B cell (primary cell): ENCODE measurements at regions of chr9 and their contacts with region 1.

Region 1: GRCh38 chr9:5628530-5629311 is at the start of gene RIC1:
- DNase-seq: peak; percentile 96
- ATAC-seq: peak; percentile 79
- H3K4me3 ChIP-seq: peak within 1 kb of the TSS; percentile 82 to 99 (median 92)
- H3K4me3 Mint-ChIP-seq: peak within 1 kb of the TSS; percentile 98
- H3K27ac ChIP-seq: peak within 1 kb of the TSS; percentile 85 to 93
- H3K27ac Mint-ChIP-seq: peak within 1 kb of the TSS; percentile 99
- H3K4me1 ChIP-seq: peaks cover 52 to 55% of the 10 kb centered on the region in 2 donors
- H3K4me1 Mint-ChIP-seq: peaks cover 59% of the 10 kb centered on the region
- H3K27me3 ChIP-seq: no peaks in the 10 kb centered on the region
- H3K27me3 Mint-ChIP-seq: no peaks in the 10 kb centered on the region
- CTCF ChIP-seq: no peak
- total RNA-seq, gene RIC1: 58.8 and 58.9 TPM in 2 replicates

Region 2: DNA sequence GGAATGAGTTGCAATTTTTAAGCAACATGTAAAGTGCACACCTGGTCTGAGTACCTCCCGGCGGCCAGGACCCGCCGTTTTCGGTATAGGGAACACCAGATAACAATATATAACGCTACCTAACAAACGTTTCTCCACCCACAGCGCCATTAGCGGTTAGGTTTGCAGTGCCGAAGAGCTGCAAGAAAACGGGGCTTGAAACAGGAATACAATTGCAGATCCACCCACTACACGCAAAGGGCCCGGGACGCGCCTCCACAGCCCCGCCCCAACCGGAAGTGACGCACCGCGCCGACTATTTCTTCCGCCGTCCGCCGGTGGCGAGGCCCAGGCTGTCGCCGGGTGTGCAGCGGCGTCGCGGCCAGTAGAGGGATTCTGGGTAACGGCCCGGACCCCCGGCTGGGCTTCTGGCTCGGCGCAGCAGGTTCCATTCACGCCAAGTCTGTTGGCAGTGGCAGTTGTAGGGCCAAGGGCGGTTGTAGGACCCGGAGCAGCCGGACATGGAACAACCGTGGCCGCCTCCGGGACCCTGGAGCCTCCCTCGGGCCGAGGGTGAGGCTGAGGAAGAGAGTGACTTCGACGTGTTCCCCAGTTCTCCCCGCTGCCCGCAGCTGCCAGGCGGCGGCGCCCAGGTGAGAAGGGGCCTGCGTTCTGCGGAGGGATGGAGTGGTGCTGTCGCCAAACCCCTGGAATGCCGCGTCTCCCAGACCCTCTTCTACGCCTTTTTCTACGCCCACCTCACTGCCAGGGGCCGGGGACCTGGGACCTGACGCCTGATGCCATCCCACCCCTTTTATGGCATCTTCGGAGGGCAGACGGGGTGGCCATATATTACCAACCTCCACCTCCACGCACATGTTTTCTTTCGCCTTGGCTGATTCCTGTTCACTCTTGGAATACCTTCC is 949.2 kb before region 1 on chr9 and contains the start of gene CDC37L1:
- CTCF ChIA-PET with region 1: no interaction called
- POLR2A ChIA-PET with region 1: interaction called, 3 read pairs
- intact Hi-C with region 1: loop called (anchors 2 kb)
- DNase-seq: peak; percentile 98
- ATAC-seq: peak; percentile 95
- H3K4me3 ChIP-seq: peak within 1 kb of the TSS; percentile 58 to 97 (median 72)
- H3K4me3 Mint-ChIP-seq: no peak within 1 kb of the TSS
- H3K27ac ChIP-seq: peak within 1 kb of the TSS; percentile 89 to 93
- H3K27ac Mint-ChIP-seq: no peak within 1 kb of the TSS
- H3K4me1 ChIP-seq: peaks cover 17 to 20% of the 10 kb centered on the region in 2 donors
- H3K4me1 Mint-ChIP-seq: peaks cover 3% of the 10 kb centered on the region
- H3K27me3 ChIP-seq: no peaks in the 10 kb centered on the region
- H3K27me3 Mint-ChIP-seq: no peaks in the 10 kb centered on the region
- CTCF ChIP-seq: peak; percentile 72
- total RNA-seq, gene CDC37L1: 16.0 and 19.3 TPM in 2 replicates

Region 3: DNA sequence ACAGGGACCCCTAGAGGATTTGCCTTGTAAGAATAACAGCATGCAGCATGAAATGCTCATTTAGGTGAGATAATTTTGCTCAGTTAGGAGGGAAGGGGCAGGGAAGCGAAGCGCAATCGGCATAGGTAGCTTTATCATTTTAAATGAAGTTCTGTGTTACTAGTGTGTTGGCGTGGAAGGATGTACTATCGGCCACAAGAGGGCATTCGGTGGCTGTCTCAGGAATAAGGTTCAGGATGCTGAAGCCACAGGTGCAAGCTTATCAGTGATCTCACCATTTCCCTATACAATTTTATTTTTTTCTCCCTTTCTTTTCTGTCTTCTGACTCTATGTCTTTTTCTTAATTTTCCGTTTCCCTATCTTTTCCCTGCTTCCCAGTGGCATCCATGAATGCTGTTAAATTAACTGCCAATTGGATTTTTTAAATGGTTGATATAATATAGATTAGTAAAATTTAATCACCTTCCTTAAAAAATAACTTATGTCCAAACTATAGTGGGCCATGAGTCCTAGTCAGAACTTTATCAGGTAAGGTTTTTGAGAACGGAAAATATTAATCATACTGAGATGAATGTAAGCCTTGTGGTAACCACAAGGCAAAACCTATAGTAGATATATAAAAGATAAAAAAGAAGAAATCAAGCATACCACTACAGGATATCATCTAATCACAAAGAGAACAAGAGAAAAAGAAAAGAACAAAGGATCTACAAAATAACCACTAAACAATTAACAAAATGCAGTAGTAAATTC is 442.1 kb before region 1 on chr9:
- CTCF ChIA-PET with region 1: interaction called, 12 read pairs
- POLR2A ChIA-PET with region 1: no interaction called
- intact Hi-C with region 1: no loop called
- DNase-seq: peak; percentile 74
- ATAC-seq: peak; percentile 79
- H3K4me3 ChIP-seq: no peak overlapping the region
- H3K4me3 Mint-ChIP-seq: no peak overlapping the region
- H3K27ac ChIP-seq: no peak overlapping the region
- H3K27ac Mint-ChIP-seq: no peak overlapping the region
- H3K4me1 ChIP-seq: no peaks in the 10 kb centered on the region
- H3K4me1 Mint-ChIP-seq: peaks cover 2% of the 10 kb centered on the region
- H3K27me3 ChIP-seq: no peaks in the 10 kb centered on the region
- H3K27me3 Mint-ChIP-seq: no peaks in the 10 kb centered on the region
- CTCF ChIP-seq: peak; percentile 78

Region 4: DNA sequence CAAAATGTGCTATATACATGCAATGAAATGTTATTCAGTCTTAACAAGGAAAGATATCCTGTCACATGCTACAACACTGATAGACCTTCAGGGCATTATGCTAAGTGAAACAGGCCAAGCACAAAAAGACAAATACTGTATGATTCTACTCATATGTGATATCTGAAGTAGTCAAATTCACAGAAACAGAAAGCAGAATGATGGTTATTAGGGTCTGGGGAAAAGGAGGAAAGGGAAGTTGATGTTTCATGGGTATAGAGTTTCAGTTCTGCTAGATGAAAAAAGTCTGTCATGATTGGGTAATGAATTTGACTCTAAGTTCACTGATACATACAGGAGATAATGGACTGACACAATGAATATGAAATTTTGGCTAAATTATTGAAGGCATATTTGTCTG is 11.0 kb before region 1 on chr9:
- CTCF ChIA-PET with region 1: interaction called, 3 read pairs
- POLR2A ChIA-PET with region 1: interaction called, 5 read pairs
- intact Hi-C with region 1: loop called (anchors 1 kb)
- DNase-seq: peak; percentile 81
- ATAC-seq: peak; percentile 99
- H3K4me3 ChIP-seq: peak overlapping the region in 1 of 5 experiments; percentile 40
- H3K4me3 Mint-ChIP-seq: peak overlapping the region; percentile 59
- H3K27ac ChIP-seq: peak overlapping the region; percentile 67 to 74
- H3K27ac Mint-ChIP-seq: peak overlapping the region; percentile 54
- H3K4me1 ChIP-seq: peaks cover 26 to 32% of the 10 kb centered on the region in 2 donors
- H3K4me1 Mint-ChIP-seq: peaks cover 42% of the 10 kb centered on the region
- H3K27me3 ChIP-seq: no peaks in the 10 kb centered on the region
- H3K27me3 Mint-ChIP-seq: no peaks in the 10 kb centered on the region
- CTCF ChIP-seq: no peak

Region 5: GRCh38 chr9:5714501-5715401 is 86.0 kb after region 1 on chr9:
- CTCF ChIA-PET with region 1: interaction called, 3 read pairs
- POLR2A ChIA-PET with region 1: no interaction called
- intact Hi-C with region 1: loop called (anchors 5 kb)
- DNase-seq: peak; percentile 22
- ATAC-seq: no peak
- H3K4me3 ChIP-seq: no peak overlapping the region
- H3K4me3 Mint-ChIP-seq: no peak overlapping the region
- H3K27ac ChIP-seq: no peak overlapping the region
- H3K27ac Mint-ChIP-seq: no peak overlapping the region
- H3K4me1 ChIP-seq: peaks cover 3 to 7% of the 10 kb centered on the region in 2 donors
- H3K4me1 Mint-ChIP-seq: peaks cover 13% of the 10 kb centered on the region
- H3K27me3 ChIP-seq: no peaks in the 10 kb centered on the region
- H3K27me3 Mint-ChIP-seq: no peaks in the 10 kb centered on the region
- CTCF ChIP-seq: peak; percentile 46

Region 6: GRCh38 chr9:5920860-5921328 is 292.2 kb after region 1 on chr9:
- CTCF ChIA-PET with region 1: no interaction called
- POLR2A ChIA-PET with region 1: no interaction called
- intact Hi-C with region 1: no loop called
- DNase-seq: no peak
- ATAC-seq: no peak
- H3K4me3 ChIP-seq: no peak overlapping the region
- H3K4me3 Mint-ChIP-seq: no peak overlapping the region
- H3K27ac ChIP-seq: no peak overlapping the region
- H3K27ac Mint-ChIP-seq: no peak overlapping the region
- H3K4me1 ChIP-seq: no peaks in the 10 kb centered on the region
- H3K4me1 Mint-ChIP-seq: no peaks in the 10 kb centered on the region
- H3K27me3 ChIP-seq: no peaks in the 10 kb centered on the region
- H3K27me3 Mint-ChIP-seq: no peaks in the 10 kb centered on the region
- CTCF ChIP-seq: no peak

Region 7: GRCh38 chr9:6681147-6681956 is 1052.6 kb after region 1 on chr9:
- CTCF ChIA-PET with region 1: no interaction called
- POLR2A ChIA-PET with region 1: no interaction called
- intact Hi-C with region 1: loop called (anchors 5 kb)
- DNase-seq: peak; percentile 96
- ATAC-seq: peak; percentile 73
- H3K4me3 ChIP-seq: peak overlapping the region; percentile 69 to 89 (median 77)
- H3K4me3 Mint-ChIP-seq: peak overlapping the region; percentile 98
- H3K27ac ChIP-seq: peak overlapping the region; percentile 93 to 97
- H3K27ac Mint-ChIP-seq: peak overlapping the region; percentile 100
- H3K4me1 ChIP-seq: peaks cover 32 to 48% of the 10 kb centered on the region in 2 donors
- H3K4me1 Mint-ChIP-seq: peaks cover 29% of the 10 kb centered on the region
- H3K27me3 ChIP-seq: no peaks in the 10 kb centered on the region
- H3K27me3 Mint-ChIP-seq: no peaks in the 10 kb centered on the region
- CTCF ChIP-seq: no peak